ENCODE measurements at regions of chr5 and their contacts with region 1.

Region 1: DNA sequence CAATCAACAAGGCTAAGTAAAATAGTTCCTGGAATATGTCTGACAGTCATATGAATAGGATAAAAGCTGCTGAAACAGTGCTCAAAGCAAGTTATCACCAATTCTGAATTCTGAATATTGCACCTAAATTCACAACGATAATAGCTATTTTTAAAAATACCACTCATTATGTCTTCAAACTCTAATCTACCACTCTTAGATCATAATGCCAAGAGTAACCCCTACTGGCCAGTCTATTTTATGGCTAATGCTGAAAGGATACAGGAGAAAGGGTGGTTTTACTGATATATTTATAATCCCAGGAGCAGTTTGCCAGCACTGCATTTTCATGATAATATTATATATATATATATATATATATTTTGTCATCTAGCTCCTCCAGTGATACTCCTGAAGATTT is 232.8 kb downstream of the PDE4D start:
- DNase-seq: peak; percentile 53
- ATAC-seq: peak; percentile 45; the same call in 1 of the 2 replicates
- H3K4me3 ChIP-seq: no peak overlapping the region
- H3K27ac ChIP-seq: no peak overlapping the region
- H3K4me1 ChIP-seq: peaks cover 23% of the 10 kb centered on the region
- H3K27me3 ChIP-seq: no peaks in the 10 kb centered on the region
- CTCF ChIP-seq: peak; percentile 55

Region 2: GRCh38 chr5:59506285-59506877 is 154.4 kb before region 1 on chr5:
- CTCF ChIA-PET with region 1: interaction called, 9 read pairs
- POLR2A ChIA-PET with region 1: interaction called, 3 read pairs
- intact Hi-C with region 1: loop called (anchors 1 kb)
- DNase-seq: peak; percentile 44
- ATAC-seq: peak; percentile 31; the same call in 1 of the 2 replicates
- H3K4me3 ChIP-seq: no peak overlapping the region
- H3K27ac ChIP-seq: no peak overlapping the region
- H3K4me1 ChIP-seq: no peaks in the 10 kb centered on the region
- H3K27me3 ChIP-seq: no peaks in the 10 kb centered on the region
- CTCF ChIP-seq: peak; percentile 61

Region 3: GRCh38 chr5:59637878-59638580 is 22.7 kb before region 1 on chr5:
- CTCF ChIA-PET with region 1: no interaction called
- POLR2A ChIA-PET with region 1: interaction called, 3 read pairs
- intact Hi-C with region 1: loop called (anchors 1 kb)
- DNase-seq: peak; percentile 49
- ATAC-seq: peak; percentile 86
- H3K4me3 ChIP-seq: no peak overlapping the region
- H3K27ac ChIP-seq: peak overlapping the region; percentile 65
- H3K4me1 ChIP-seq: peaks cover 22% of the 10 kb centered on the region
- H3K27me3 ChIP-seq: no peaks in the 10 kb centered on the region
- CTCF ChIP-seq: no peak

Region 4: GRCh38 chr5:59648949-59649921 is 11.5 kb before region 1 on chr5:
- CTCF ChIA-PET with region 1: no interaction called
- POLR2A ChIA-PET with region 1: no interaction called
- intact Hi-C with region 1: no loop called
- DNase-seq: no peak
- ATAC-seq: no peak
- H3K4me3 ChIP-seq: no peak overlapping the region
- H3K27ac ChIP-seq: no peak overlapping the region
- H3K4me1 ChIP-seq: no peaks in the 10 kb centered on the region
- H3K27me3 ChIP-seq: no peaks in the 10 kb centered on the region
- CTCF ChIP-seq: no peak